Calu3 (cell line): ENCODE measurements at regions of chr12 and their contacts with region 1.

Region 1: DNA sequence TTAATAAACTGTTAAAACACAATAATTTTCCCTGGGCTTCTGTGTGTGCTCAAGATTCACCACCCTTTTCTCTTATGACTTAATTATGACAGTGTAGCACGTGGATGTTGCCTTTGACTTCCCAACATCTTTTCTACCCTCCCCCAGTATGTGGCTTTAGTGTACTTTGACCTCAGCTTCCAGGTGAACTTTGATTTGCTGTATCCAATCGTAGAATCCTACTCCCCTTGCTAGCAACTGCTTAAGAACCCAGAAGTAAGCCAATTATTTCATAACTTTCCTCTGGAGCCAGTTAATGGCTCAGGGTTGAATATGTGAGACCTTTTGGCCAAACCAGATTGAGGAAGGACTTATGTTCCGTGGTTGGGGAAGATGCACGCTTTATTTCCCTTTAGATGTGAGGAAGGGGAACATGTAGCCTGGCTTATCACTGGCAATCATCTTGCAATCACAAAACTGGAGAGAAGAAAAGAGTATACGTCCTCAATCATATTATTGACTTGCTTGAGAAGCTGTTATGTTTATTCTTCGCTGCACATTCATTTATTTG is 259.6 kb upstream of the ATP2B1 start:
- DNase-seq: no peak
- H3K4me3 Mint-ChIP-seq: no peak overlapping the region
- H3K27ac Mint-ChIP-seq: no peak overlapping the region
- H3K4me1 Mint-ChIP-seq: peaks cover 48% of the 10 kb centered on the region
- H3K27me3 Mint-ChIP-seq: no peaks in the 10 kb centered on the region
- CTCF ChIP-seq: no peak

Region 2: GRCh38 chr12:89980236-89980635 is 12.0 kb after region 1 on chr12:
- CTCF ChIA-PET with region 1: no interaction called
- intact Hi-C with region 1: no loop called
- DNase-seq: no peak
- H3K4me3 Mint-ChIP-seq: no peak overlapping the region
- H3K27ac Mint-ChIP-seq: no peak overlapping the region
- H3K4me1 Mint-ChIP-seq: peaks cover 4% of the 10 kb centered on the region
- H3K27me3 Mint-ChIP-seq: no peaks in the 10 kb centered on the region
- CTCF ChIP-seq: no peak

Region 3: DNA sequence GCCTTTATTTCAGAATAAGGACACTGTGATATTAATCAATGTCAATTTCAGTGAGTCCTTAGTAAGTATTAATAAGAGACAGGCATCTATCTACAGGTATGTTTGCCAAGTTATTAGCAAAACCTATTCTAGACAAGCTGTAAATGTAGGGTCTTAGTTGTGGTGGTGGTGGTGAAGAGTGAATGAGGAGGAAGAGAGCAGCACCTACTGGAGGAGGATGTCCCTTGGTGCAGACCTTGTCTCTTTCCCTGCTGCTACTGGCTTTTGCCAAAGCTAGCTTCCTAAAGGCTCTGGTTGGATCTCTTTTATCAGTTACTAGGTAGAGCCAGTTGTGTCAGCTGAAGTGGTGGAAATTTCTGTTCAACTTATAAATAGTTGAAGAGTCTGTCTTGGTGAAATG is 45.2 kb after region 1 on chr12:
- CTCF ChIA-PET with region 1: no interaction called
- intact Hi-C with region 1: loop called (anchors 1 kb)
- DNase-seq: no peak
- H3K4me3 Mint-ChIP-seq: no peak overlapping the region
- H3K27ac Mint-ChIP-seq: no peak overlapping the region
- H3K4me1 Mint-ChIP-seq: no peaks in the 10 kb centered on the region
- H3K27me3 Mint-ChIP-seq: no peaks in the 10 kb centered on the region
- CTCF ChIP-seq: no peak

Region 4: GRCh38 chr12:90102957-90103652 is 134.9 kb after region 1 on chr12:
- CTCF ChIA-PET with region 1: interaction called, 3 read pairs
- intact Hi-C with region 1: loop called (anchors 5 kb)
- DNase-seq: peak; percentile 12
- H3K4me3 Mint-ChIP-seq: no peak overlapping the region
- H3K27ac Mint-ChIP-seq: no peak overlapping the region
- H3K4me1 Mint-ChIP-seq: peaks cover 40% of the 10 kb centered on the region
- H3K27me3 Mint-ChIP-seq: no peaks in the 10 kb centered on the region
- CTCF ChIP-seq: peak; percentile 41